ENCODE measurements at regions of chr7 and their contacts with region 1.

Region 1: GRCh38 chr7:25543798-25544197 is 315.5 kb upstream of the NPVF start:
- DNase-seq: no peak
- H3K4me3 ChIP-seq: no peak overlapping the region
- H3K27ac ChIP-seq: no peak overlapping the region
- H3K4me1 ChIP-seq: peaks cover 5% of the 10 kb centered on the region
- H3K27me3 ChIP-seq: no peaks in the 10 kb centered on the region
- CTCF ChIP-seq: no peak
- EP300 ChIP-seq: no peak
- POLR2A ChIP-seq: no peak

Region 2: GRCh38 chr7:25429731-25430130 is 114.1 kb before region 1 on chr7:
- intact Hi-C with region 1: no loop called
- DNase-seq: peak in 2 of 5 donors; percentile 22 to 37
- H3K4me3 ChIP-seq: no peak overlapping the region
- H3K27ac ChIP-seq: peak overlapping the region in 1 of 2 donors; percentile 7
- H3K4me1 ChIP-seq: peaks cover 7% of the 10 kb centered on the region
- H3K27me3 ChIP-seq: no peaks in the 10 kb centered on the region
- CTCF ChIP-seq: no peak
- EP300 ChIP-seq: no peak
- POLR2A ChIP-seq: no peak

Region 3: DNA sequence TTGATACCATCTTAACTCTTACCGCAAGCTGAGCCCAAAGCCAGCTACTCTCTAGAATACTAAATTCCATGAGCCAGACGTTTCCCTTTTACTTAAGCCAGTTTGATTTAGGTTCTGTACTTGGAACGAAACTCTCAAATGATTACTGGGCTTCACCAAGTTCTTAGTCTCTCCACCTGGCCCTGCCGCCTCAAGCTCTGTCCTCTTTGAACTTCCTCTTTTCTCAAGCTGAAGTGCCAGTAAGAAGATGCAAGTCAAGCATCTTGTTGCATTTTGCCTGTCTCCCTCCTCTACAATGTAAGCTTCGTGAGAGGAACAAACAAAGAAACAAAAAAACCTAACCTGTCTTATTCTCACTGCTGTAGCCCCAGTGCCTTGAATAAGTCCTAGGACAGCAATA is 42.7 kb after region 1 on chr7:
- intact Hi-C with region 1: loop called in 1 of 4 experiments (anchors 1 kb)
- DNase-seq: no peak
- H3K4me3 ChIP-seq: no peak overlapping the region
- H3K27ac ChIP-seq: no peak overlapping the region
- H3K4me1 ChIP-seq: no peaks in the 10 kb centered on the region
- H3K27me3 ChIP-seq: no peaks in the 10 kb centered on the region
- CTCF ChIP-seq: no peak
- EP300 ChIP-seq: no peak
- POLR2A ChIP-seq: no peak

Measured in ovary (tissue), 10 donors.